Head of caudate nucleus (tissue), 42 donors: ENCODE measurements at regions of chr2 and their contacts with region 1.

Region 1: GRCh38 chr2:99559075-99559662 is 69.4 kb upstream of the REV1 start:
- DNase-seq: peak; percentile 69 to 97 (median 92)

Region 2: DNA sequence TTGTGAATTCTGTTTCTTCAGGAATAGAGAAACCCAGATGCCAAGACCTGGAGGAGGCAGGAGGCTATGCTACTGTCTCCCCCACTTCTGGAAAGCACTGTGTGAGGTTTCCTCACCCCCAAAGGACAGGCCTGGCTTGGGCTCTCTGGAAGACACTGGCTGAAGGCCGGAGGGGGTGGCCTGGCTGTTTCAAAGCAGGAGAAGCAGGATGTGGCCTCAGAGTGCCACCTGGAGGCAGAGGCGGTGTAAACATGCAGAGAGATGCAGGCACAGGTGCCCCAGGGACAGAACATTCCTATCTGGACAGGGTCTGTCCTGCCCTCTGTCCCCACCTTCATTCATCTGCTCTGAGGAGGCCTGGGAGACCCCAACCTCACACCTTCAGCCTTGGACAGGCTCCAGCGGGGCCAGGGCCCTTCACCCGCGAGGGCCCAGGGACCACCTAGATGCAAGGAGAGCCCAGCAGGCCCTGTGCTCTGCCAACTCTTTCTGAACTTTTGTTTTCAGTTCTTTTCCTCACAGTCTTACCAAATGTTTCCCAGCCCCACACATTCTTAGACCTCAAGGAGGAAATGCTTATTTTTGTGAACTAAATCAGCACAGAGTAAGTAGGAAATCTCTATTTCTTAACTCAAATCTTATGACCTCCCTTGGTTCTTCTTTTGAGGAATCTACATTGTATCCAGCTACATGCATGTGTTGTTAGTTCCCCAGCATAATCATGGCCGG is 683.9 kb after region 1 on chr2:
- intact Hi-C with region 1: loop called (anchors 5 kb)
- DNase-seq: peak; percentile 21 to 81 (median 58)

Region 3: DNA sequence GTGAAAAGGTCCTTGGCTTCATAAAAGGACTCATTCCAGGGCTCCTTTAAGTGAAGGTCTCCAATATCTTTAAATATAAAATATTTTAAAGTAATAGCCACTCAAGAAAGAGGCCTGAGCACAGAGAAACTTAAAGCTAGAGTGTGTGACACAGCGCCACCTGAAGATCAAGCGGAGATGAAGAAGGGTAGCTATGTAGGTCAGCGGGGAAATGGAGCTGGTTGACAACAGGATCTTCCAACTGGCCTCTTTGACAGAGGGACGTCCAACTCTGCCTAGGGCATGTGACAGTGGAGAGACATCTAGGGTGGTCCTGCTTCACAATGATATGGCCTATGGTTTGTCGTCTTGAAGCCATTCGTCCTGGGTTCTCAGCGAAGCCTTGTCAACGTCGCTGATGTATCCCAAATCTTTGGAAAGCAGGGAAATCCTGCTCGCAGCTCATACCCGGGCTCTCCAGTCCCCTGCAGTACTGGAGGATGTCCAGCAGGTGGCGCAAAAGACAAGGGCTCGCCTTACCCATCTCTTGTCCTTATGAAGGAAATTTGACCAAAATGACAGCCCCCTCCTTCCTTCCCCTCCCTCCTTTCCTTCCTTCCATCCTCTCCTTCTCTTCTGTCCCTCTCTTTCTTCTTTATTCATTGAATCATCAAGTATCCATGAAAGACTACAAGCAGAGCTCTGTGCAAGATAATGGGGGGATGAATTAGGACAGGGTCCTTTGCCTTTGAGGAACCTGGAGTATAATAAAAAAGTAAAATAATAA is 703.6 kb after region 1 on chr2:
- intact Hi-C with region 1: loop called (anchors 5 kb)
- DNase-seq: peak; percentile 28 to 91 (median 83)